Heart right ventricle (tissue), 16 donors: ENCODE measurements at regions of chr2 and their contacts with region 1.

Region 1: DNA sequence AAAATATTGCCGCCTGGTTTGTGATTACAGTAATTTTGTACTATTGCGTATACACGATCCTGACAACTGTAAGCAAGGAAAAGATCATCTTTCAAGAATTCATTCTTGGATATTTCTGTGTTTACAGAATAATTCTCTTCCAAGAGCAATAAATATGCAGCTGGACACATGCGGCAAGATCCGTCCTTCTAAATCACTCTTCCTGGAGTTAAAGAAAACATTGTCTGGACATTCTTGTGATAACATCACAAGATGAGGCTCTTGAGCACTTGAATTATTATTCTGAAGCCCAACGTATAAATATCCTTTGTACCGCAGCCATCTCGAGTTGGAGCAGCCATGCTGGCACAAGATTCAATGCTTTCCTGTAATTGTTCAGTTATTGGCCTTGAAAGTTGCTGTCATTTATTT is 9.9 kb downstream of the FHL2 start:
- DNase-seq: no peak
- ATAC-seq: peak in 6 of 8 donors; percentile 8 to 27 (median 20)
- H3K4me3 ChIP-seq: no peak overlapping the region
- H3K27ac ChIP-seq: peak overlapping the region; percentile 45 to 95 (median 62)
- H3K4me1 ChIP-seq: peaks cover 20 to 100% (median 65%) of the 10 kb centered on the region in 9 donors
- H3K27me3 ChIP-seq: no peaks in the 10 kb centered on the region
- CTCF ChIP-seq: no peak

Region 2: DNA sequence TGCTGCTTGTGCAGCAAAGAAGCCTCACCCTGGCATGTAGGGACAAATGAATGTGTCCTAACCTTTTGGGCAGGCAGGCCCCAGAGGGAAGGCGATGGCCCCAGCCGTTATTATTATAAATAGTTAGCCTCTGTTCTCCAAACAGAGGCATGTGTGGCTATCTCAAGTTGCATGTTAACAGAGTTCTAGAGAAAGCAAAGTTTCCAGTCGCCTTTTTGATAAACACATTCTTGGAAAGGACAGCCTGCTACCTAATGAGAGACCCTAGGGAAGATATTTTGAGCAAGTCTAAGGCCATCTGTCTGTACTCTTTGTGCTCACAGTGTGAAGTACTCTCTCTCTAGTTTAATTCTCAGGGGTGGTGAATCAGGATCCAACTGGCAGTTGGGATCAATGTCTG is 107.3 kb after region 1 on chr2:
- intact Hi-C with region 1: loop called in 1 of 10 experiments (anchors 5 kb)
- DNase-seq: peak in 1 of 2 donors; percentile 48
- ATAC-seq: peak; percentile 22 to 85 (median 80)
- H3K4me3 ChIP-seq: no peak overlapping the region
- H3K27ac ChIP-seq: peak overlapping the region; percentile 68 to 94 (median 88)
- H3K4me1 ChIP-seq: peaks cover 0 to 55% (median 43%) of the 10 kb centered on the region in 9 donors
- H3K27me3 ChIP-seq: no peaks in the 10 kb centered on the region
- CTCF ChIP-seq: no peak